AG04449 (cell line): ENCODE measurements at regions of chr9 and their contacts with region 1.

Region 1: GRCh38 chr9:70111042-70111602 is 67.5 kb downstream of the MAMDC2 start:
- DNase-seq: no peak
- H3K4me3 ChIP-seq: no peak overlapping the region
- CTCF ChIP-seq: peak; percentile 79

Region 2: DNA sequence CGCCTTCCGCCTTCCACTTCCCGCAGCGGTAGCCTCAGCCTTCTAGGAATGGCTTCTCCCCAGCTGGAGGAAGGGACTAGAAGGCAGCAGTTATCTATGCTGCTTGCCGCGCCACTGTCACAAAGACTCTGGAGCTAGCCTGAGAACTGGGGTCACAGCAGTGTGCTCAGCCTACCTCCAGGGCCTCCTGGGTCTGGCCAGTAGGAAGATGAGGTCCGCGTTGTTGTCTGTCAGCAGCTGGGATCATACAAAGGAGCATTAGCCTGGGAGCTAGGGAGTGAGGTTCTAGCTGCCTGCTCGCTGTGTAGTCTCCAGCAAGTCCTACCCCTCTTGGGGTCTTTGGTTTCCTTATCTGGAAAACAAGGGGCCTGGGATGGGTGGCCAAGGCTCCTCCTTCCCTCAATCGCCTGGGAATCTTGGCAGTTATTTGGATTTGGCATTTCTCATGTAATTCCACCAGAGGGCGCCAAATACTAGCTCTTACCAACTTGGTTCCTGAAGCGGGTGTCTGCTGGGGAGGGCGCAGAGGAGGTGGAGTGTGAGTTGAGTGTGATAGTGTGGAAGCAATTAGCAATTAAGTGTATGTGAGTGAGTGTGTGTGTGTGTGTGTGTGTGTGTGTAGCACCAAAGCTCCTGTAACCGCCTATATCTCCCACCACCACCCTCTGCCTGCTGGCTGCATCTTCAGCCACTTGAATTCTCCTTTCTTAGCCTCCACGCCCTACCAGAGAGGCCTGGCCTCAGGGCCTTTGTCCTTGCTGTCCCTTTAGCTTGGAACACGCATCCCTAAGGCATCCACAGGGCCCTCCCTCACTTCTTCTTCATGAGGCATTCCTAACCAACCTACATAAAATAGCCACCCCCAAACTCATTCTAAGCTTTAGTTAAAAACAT is 689.0 kb before region 1 on chr9:
- CTCF ChIA-PET with region 1: interaction called, 32 read pairs
- POLR2A ChIA-PET with region 1: no interaction called
- DNase-seq: no peak
- H3K4me3 ChIP-seq: no peak overlapping the region
- CTCF ChIP-seq: peak; percentile 69

Region 3: DNA sequence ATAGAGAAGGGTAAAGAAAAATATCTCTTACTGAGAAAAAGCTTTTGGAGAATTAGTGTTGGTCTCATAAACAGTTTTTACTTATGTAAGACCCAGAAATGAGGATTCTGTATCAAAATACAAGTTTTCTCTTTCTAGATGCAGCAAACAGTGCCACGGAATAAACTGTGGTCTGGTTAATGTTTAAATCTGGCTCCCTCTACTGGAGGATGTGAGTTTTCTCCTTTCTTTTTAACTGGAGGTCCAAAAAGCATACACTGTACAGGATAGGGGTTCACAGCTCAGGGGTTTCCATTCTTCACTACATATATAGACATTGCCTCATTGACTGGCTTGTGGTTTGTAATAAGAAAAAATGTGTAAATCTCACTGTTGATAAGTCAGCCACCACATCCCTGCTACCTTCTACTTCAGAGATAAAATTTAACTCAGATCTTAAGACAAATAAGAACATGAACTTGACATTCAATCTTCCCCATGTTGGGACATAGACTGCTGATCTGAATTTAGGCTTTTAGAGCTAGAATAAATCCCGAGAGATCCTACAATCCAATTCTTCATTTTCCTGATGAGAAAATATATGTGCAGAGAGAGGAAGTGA is 191.6 kb before region 1 on chr9:
- CTCF ChIA-PET with region 1: interaction called, 93 read pairs
- POLR2A ChIA-PET with region 1: no interaction called
- DNase-seq: no peak
- H3K4me3 ChIP-seq: no peak overlapping the region
- CTCF ChIP-seq: peak; percentile 54

Region 4: GRCh38 chr9:69971643-69972449 is 139.3 kb before region 1 on chr9:
- CTCF ChIA-PET with region 1: interaction called, 385 read pairs
- POLR2A ChIA-PET with region 1: interaction called, 3 read pairs
- DNase-seq: no peak
- H3K4me3 ChIP-seq: no peak overlapping the region
- CTCF ChIP-seq: peak; percentile 84

Region 5: DNA sequence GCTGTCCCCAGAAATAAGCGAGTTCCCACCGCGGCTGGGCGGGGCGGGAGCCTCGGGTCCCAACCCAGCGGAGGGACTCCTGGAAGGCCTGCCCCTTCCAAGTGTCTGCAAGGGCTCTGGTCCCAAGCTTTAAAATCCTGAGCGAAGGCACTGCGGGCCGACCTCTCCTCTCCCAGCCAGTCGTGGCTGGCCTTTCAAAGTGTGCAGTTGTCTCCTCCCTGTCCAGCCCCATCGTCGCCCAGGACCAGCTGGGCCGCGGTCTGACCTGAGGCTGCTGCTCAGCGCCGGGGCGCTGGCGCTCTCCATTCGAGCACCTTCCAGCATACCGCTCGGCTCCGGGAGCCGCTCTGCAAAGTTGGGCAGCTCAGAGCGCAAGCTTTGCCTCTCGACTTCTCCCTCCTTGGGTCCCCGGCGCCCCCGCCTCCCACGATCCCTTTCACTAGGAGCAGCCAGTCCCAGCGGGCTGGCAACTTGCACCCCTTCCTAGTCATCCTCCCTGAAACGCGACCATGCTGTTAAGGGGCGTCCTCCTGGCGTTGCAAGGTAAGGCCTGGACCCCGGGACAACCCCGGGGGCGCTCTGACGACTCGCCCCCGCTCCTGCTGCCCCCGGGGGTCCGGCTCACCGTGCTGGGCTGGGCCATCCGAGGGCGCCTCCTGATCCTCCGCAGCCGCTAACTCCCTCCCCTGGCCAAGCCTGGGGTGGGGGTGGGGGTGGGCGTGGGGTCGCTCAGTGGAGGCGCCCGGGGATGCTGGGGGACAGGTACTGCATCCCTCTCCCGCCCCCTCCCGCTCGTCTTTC is 67.2 kb before region 1 on chr9 and contains the start of gene MAMDC2:
- CTCF ChIA-PET with region 1: interaction called, 14 read pairs
- POLR2A ChIA-PET with region 1: no interaction called
- DNase-seq: no peak
- H3K4me3 ChIP-seq: peak within 1 kb of the TSS; percentile 57
- CTCF ChIP-seq: no peak

Region 6: DNA sequence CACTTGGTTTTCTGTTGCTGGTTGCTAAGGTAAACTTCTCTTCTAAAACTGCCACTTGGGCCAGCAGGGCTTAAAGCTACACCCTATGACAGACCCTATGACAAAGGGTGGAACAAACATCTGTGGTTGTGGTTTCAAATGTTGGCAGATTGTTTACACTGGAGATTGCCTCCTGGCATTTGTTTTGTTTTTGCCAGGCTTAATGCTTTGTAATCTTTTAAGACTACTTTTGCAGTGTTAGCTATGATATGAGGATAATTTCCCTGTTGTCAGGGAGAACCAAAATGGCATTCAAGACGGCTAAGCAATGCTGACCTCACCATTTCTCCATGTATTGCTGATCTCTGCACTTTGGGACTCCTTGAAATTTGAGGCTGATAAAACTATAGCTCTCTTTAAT is 17.2 kb before region 1 on chr9:
- CTCF ChIA-PET with region 1: interaction called, 108 read pairs
- POLR2A ChIA-PET with region 1: no interaction called
- DNase-seq: no peak
- H3K4me3 ChIP-seq: no peak overlapping the region
- CTCF ChIP-seq: no peak

Region 7: GRCh38 chr9:70229579-70229978 is 118.5 kb after region 1 on chr9:
- CTCF ChIA-PET with region 1: interaction called, 83 read pairs
- POLR2A ChIA-PET with region 1: no interaction called
- DNase-seq: no peak
- H3K4me3 ChIP-seq: no peak overlapping the region
- CTCF ChIP-seq: peak; percentile 35